Ascending aorta (tissue), 2 donors: ENCODE measurements at regions of chr2 and their contacts with region 1.

Region 1: GRCh38 chr2:203928849-203929248 is 7.7 kb upstream of the ICOS start:
- DNase-seq: no peak
- H3K4me3 ChIP-seq: no peak overlapping the region
- H3K27ac ChIP-seq: no peak overlapping the region
- H3K4me1 ChIP-seq: peaks cover 0 to 9% of the 10 kb centered on the region in 2 donors
- H3K27me3 ChIP-seq: no peaks in the 10 kb centered on the region
- CTCF ChIP-seq: peak in 2 of 3 experiments; percentile 22 to 48

Region 2: GRCh38 chr2:203252818-203253217 is 676.0 kb before region 1 on chr2:
- intact Hi-C with region 1: no loop called
- DNase-seq: no peak
- H3K4me3 ChIP-seq: no peak overlapping the region
- H3K27ac ChIP-seq: no peak overlapping the region
- H3K4me1 ChIP-seq: no peaks in the 10 kb centered on the region
- H3K27me3 ChIP-seq: no peaks in the 10 kb centered on the region
- CTCF ChIP-seq: no peak

Region 3: DNA sequence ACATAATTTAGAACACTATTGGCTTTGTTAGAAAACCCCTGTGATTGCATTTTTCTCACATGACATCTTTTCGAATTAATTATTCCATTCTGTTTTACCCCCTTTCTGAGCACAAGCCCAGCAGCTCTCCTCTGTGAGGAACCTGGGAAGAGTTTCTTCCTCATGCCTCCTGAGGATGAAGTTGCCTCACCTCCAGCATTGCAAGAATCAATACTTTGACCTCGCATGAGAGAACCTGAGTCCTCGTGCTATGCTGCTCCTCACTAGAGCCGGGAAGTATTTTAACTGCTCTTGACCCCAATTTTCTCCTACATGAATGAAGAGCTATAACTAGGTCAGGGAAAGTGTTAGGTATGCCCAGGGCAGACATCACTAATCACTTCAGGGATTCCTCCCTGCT is 316.6 kb before region 1 on chr2:
- intact Hi-C with region 1: no loop called
- DNase-seq: no peak
- H3K4me3 ChIP-seq: no peak overlapping the region
- H3K27ac ChIP-seq: no peak overlapping the region
- H3K4me1 ChIP-seq: no peaks in the 10 kb centered on the region
- H3K27me3 ChIP-seq: no peaks in the 10 kb centered on the region
- CTCF ChIP-seq: no peak

Region 4: DNA sequence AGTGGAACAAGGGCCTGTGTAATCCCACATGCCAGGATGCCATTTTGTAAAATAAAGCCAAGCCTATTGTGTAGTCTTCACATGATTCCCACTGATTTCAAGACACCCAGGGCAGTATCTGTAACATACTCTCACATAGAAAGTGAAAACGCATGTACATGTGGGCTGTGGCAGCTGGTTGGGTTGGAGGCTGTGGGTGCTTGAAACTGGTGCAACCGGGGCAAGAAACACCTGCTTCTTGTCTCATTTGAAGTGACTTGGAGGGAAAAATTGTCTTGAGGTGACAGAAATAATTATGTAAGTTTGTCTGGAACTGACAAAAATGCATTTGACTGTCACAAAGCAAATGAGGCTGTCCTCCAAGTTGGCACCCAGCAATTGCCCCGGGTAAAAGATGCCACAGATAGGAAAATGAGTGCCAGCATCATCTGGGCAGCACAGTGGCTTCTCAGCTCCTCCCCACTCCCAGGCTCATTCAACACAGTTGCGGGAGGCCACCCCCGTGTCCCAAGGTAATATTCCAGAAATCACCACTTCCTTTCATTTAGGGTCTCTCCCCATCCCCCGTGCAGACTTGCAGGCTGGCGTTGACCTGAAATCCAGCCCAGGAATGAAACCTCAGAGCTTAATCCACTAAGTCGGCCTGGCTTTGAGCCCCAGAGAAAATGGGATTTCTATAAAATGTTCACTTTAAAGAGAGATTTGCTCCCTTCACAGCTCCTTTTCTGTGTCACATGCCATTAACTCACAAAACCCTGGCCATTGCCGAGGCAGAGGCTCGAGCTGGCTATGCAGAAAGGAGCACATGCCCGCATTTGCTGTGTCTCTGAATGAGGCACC is 322.5 kb after region 1 on chr2:
- intact Hi-C with region 1: loop called (anchors 10 kb)
- DNase-seq: no peak
- H3K4me3 ChIP-seq: no peak overlapping the region
- H3K27ac ChIP-seq: no peak overlapping the region
- H3K4me1 ChIP-seq: peaks cover 0 to under 1% of the 10 kb centered on the region in 2 donors
- H3K27me3 ChIP-seq: no peaks in the 10 kb centered on the region
- CTCF ChIP-seq: no peak